ENCODE measurements at regions of chr4 and their contacts with region 1.

Region 1: GRCh38 chr4:93839704-93840103 is 11.2 kb downstream of the ATOH1 start:
- DNase-seq: no peak
- ATAC-seq: no peak

Region 2: GRCh38 chr4:92580816-92581215 is 1258.9 kb before region 1 on chr4:
- intact Hi-C with region 1: no loop called
- DNase-seq: no peak
- ATAC-seq: no peak

Region 3: GRCh38 chr4:93802085-93802484 is 37.6 kb before region 1 on chr4:
- intact Hi-C with region 1: no loop called
- DNase-seq: no peak
- ATAC-seq: no peak

Region 4: GRCh38 chr4:93855926-93856325 is 16.2 kb after region 1 on chr4:
- intact Hi-C with region 1: no loop called
- DNase-seq: no peak
- ATAC-seq: no peak

Region 5: GRCh38 chr4:93897559-93897958 is 57.9 kb after region 1 on chr4:
- intact Hi-C with region 1: loop called (anchors 2 kb)
- DNase-seq: no peak
- ATAC-seq: no peak

Measured in sciatic nerve (tissue), 2 donors.